Right ventricle myocardium inferior (tissue), 1 donor: ENCODE measurements at regions of chr7 and their contacts with region 1.

Region 1: DNA sequence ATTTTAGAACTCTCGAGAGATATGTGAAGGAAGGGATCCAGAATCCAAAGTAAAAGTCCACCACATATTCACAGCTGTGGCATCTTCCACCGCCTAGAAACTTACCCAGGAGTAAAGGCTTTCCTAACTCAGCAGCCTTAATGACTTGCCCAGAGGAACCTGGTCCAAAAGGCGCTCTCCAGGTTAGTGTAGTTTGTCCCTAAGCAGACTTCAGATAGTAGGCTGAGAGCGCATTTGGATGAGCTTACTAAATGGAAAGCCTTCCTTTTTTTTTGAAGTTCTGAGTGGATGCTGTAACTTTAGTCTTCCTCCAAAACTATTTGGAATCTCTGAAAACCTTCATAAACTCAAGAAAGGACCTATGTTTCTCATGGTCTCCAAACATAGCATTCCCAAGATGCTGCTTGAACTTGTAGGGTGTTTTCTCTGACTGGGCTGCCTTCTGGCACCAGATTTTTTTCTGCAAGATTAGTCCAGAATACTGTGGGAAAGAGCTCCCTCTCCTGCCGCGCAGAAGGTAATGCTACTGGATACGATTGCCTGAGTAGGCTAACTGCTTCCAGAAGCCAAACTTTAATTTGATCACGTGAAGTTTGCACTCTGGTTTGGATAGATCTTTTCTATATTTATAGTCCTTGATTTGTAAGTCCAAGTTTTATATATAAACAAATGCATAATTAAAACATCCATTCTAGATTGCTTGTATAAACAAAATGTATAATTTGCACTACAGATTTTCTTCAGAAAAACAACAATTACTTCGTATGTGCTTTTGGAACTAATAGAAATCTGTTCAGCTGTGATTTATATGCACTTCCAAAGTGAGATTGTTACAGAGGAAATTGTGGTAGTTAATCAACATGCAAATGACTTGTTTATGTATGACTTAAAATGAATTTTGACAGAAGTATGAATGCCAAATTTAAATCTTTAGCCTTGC is 19.6 kb upstream of the GPR37 start:
- DNase-seq: no peak
- ATAC-seq: peak; percentile 60

Region 2: DNA sequence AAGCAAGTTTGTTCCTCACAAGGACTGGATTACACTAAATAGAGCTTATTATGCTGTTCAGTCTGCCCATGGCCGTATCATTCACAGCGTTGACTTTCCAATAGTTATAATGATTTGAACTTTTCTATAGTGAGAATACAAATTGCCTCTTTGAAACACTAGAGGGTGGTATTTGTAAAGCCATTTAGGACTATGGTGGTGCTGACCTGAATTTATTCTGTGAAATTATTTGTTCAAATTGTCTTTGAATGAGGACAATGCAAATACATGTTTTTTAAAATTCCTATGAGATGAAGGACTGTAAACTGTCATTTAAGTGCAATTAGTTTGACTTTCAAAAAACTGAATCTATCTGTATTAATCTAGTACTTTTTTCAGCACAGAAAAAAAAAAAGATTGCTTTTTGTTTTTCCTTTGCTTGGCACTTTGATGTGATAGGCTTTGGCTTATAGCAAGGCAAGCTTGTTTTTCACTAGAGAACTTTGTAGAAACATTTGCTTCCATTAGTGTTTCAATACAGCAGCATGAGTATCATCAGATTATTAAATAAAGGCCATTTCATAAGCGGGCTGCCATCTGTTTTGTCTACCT is 629.6 kb before region 1 on chr7:
- intact Hi-C with region 1: loop called (anchors 5 kb)
- DNase-seq: no peak
- ATAC-seq: no peak

Region 3: DNA sequence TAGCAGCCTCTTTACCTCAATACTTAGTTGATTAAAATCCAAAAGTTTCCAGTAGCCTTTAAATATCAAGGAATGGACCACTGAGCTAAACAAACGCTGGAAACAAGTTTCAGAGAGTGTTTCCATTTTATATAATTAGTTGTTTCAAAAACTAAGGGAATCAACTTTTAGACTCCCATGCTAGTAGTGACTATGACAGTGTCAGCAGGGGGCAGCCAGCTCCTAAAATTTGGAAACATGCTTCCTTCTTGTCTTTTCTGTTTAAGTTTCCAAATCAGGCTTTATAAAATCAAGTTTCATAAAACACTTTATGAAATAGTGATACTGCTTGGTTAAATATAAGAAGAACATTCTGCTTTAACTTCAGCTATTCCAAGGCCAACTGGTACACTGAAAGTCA is 614.1 kb before region 1 on chr7:
- intact Hi-C with region 1: loop called (anchors 2 kb)
- DNase-seq: no peak
- ATAC-seq: no peak